ENCODE measurements at regions of chr10 and their contacts with region 1.

Region 1: GRCh38 chr10:17200912-17201793 is at the start of gene TRDMT1:
- H3K4me3 ChIP-seq: peak within 1 kb of the TSS; percentile 76
- H3K27ac ChIP-seq: peak within 1 kb of the TSS; percentile 87
- H3K4me1 ChIP-seq: peaks cover 4% of the 10 kb centered on the region; the same call in 1 of the 2 replicates
- CTCF ChIP-seq: peak; percentile 51; the same call in 1 of the 2 replicates

Region 2: DNA sequence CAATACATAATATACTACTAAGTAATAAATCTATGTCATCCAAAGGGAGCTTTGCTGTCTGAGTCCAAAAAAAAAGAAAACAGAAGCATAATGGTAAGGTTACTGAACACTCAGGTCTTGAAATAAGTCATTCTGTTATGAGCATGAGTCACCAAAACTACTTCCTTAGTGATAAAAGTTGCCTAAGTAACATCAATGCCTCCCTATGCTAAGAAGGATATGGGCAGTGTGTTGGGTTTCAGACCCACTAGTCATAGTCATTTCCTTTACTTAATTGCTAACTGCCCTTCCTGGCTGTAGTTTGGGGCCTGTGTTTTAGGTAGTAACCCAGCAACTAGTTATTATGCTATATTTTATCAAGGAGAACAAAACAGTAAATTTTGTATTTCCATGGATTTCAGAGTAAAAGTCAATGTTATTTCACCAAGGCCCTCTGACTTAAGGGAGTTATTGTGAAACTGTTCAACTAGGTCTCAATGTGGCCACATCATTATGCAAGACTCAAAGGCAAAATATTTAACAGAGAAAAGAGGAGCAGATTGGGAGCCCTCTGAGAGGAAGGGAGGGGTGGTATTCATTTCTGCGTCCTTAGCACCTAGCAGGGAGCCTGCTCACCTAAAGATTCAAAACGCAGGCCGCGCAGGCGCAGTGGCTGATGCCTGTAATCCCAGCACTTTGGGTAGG is 15.2 kb after region 1 on chr10:
- CTCF ChIA-PET with region 1: no interaction called
- POLR2A ChIA-PET with region 1: interaction called, 10 read pairs
- H3K4me3 ChIP-seq: no peak overlapping the region
- H3K27ac ChIP-seq: 0 out of 2 replicates have a peak overlapping the region, but pooled peaks have one; percentile 4
- H3K4me1 ChIP-seq: peaks cover 8% of the 10 kb centered on the region
- CTCF ChIP-seq: no peak

Region 3: DNA sequence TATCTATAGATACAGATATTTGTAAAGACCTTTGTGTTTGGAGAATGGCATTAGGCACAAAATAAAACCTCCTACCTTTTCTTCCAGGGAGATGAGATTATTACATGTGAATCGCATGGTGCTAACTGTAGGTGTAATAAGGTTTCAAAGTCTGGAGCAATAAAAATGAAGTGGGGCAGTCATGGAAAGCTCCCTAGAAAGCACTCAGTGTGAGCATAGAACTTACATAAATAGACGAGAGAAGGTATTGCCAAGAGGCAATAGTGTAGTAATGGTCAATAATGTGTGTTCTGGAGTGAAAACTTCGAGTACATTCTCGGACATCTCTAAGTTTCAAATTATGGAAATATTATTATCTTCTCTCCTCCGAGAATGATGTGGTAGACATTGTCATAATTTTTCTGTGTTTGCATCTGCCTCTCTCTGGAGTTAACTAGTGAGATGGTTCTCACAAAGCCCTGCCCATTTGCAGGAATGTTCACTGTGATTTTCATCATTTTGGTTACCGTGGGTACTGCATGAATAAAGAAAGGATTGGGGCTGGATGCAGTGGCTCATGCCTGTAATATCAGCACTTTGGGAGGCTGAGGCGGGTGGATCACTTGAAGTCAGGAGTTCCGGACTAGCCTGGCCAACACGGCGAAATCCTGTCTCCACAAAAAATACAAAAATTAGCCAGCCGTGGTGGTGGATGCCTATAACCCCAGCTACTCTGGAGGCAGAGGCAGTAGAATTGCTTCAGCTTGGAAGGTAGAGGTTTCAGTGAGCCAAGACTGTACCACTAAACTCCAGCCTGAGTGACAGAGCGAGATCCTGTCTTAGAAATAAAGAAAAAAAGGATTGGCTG is 37.5 kb after region 1 on chr10:
- CTCF ChIA-PET with region 1: no interaction called
- POLR2A ChIA-PET with region 1: interaction called, 19 read pairs
- H3K4me3 ChIP-seq: no peak overlapping the region
- H3K27ac ChIP-seq: no peak overlapping the region
- H3K4me1 ChIP-seq: no peaks in the 10 kb centered on the region
- CTCF ChIP-seq: no peak

Region 4: DNA sequence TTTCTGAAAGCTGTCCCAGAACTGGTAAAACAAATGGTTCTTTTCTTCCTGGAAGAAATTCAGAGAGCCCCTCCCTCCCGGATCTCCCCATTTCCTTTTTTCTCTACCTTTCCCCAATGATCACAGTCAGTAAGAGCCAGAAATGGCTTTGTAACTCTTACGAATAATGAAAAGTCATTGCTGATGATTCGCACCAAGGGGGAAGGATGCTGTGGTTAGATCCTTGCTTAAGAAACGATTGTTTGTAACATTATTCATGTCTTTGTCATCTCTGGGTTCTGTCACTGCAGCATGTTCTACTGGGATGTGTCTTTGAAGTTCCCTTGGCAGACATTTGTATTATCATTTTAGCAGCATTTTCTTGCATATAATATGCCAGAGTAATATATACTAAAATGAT is 1078.0 kb after region 1 on chr10:
- CTCF ChIA-PET with region 1: no interaction called
- POLR2A ChIA-PET with region 1: no interaction called
- H3K4me3 ChIP-seq: no peak overlapping the region
- H3K27ac ChIP-seq: no peak overlapping the region
- H3K4me1 ChIP-seq: no peaks in the 10 kb centered on the region
- CTCF ChIP-seq: no peak

Measured in HEK293 (cell line).